ENCODE measurements at regions of chr2 and their contacts with region 1.

Region 1: DNA sequence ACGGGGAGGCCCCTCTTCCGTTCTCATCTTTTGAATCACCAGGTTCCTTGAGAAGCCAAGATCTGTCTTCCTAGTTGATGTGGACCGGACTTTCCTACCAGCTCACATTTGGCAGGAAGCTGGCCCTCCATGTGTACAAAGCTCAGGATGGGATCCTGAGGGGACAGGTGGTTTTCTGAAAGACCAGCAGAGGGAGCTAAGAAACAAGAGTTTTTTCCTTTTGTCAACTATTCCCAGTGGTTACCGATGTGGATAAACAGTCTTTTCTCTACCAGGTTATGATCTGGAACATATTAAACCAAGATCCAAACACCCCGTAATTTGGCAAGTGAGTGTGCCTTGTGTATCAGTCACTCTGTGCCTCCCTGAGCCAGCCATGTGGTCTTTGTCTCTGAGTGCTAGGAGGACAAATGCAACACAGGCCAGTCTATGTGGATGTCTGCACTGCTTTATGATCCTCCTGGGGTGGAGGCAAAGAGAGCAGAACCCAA is 25.1 kb upstream of the ARHGAP25 start:
- DNase-seq: no peak
- H3K4me3 ChIP-seq: no peak overlapping the region
- CTCF ChIP-seq: peak; percentile 62

Region 2: DNA sequence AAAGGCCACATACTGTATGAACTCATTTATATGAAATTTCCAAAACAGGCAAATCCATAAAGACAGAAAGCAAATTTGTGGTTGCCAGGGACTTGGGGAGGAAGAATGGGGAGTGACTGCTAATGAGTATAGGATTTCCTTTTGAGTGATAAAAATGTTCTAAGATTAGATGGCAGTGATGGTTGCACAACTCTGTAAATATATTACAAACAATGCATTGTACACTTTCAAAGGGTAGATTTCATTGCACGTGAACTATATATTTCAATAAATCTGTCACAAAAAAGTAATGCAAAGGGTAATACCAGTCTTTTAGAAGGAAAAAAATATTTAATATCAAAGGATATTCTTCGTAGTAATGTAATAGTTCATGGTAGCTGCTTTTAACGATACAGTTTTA is 129.8 kb before region 1 on chr2:
- CTCF ChIA-PET with region 1: no interaction called
- POLR2A ChIA-PET with region 1: no interaction called
- DNase-seq: no peak
- H3K4me3 ChIP-seq: no peak overlapping the region
- CTCF ChIP-seq: no peak

Region 3: GRCh38 chr2:68698567-68699377 is 10.7 kb before region 1 on chr2:
- CTCF ChIA-PET with region 1: interaction called, 16 read pairs
- POLR2A ChIA-PET with region 1: no interaction called
- DNase-seq: no peak
- H3K4me3 ChIP-seq: no peak overlapping the region
- CTCF ChIP-seq: no peak

Region 4: GRCh38 chr2:68721482-68722101 is 12.1 kb after region 1 on chr2:
- CTCF ChIA-PET with region 1: interaction called, 24 read pairs
- POLR2A ChIA-PET with region 1: no interaction called
- DNase-seq: no peak
- H3K4me3 ChIP-seq: no peak overlapping the region
- CTCF ChIP-seq: no peak

Region 5: GRCh38 chr2:68726608-68727367 is 17.3 kb after region 1 on chr2:
- CTCF ChIA-PET with region 1: interaction called, 24 read pairs
- POLR2A ChIA-PET with region 1: no interaction called
- DNase-seq: no peak
- H3K4me3 ChIP-seq: no peak overlapping the region
- CTCF ChIP-seq: no peak

Region 6: GRCh38 chr2:68909793-68910674 is 200.6 kb after region 1 on chr2:
- CTCF ChIA-PET with region 1: interaction called, 54 read pairs
- POLR2A ChIA-PET with region 1: no interaction called
- DNase-seq: no peak
- H3K4me3 ChIP-seq: no peak overlapping the region
- CTCF ChIP-seq: peak; percentile 80

Region 7: GRCh38 chr2:68918497-68918896 is 209.0 kb after region 1 on chr2:
- CTCF ChIA-PET with region 1: interaction called, 143 read pairs
- POLR2A ChIA-PET with region 1: no interaction called
- DNase-seq: no peak
- H3K4me3 ChIP-seq: no peak overlapping the region
- CTCF ChIP-seq: no peak

Region 8: GRCh38 chr2:68925295-68925896 is 215.9 kb after region 1 on chr2:
- CTCF ChIA-PET with region 1: interaction called, 143 read pairs
- POLR2A ChIA-PET with region 1: no interaction called
- DNase-seq: no peak
- H3K4me3 ChIP-seq: no peak overlapping the region
- CTCF ChIP-seq: peak; percentile 72

Measured in AG04449 (cell line).